Activated CD4-positive, alpha-beta T cell treated with anti-CD3 and anti-CD28 coated beads, Interleukin-2, amount 10 ng/mL, durations not matched to agents 7 days and 5 days (primary cell): ENCODE measurements at regions of chr20 and their contacts with region 1.

Region 1: DNA sequence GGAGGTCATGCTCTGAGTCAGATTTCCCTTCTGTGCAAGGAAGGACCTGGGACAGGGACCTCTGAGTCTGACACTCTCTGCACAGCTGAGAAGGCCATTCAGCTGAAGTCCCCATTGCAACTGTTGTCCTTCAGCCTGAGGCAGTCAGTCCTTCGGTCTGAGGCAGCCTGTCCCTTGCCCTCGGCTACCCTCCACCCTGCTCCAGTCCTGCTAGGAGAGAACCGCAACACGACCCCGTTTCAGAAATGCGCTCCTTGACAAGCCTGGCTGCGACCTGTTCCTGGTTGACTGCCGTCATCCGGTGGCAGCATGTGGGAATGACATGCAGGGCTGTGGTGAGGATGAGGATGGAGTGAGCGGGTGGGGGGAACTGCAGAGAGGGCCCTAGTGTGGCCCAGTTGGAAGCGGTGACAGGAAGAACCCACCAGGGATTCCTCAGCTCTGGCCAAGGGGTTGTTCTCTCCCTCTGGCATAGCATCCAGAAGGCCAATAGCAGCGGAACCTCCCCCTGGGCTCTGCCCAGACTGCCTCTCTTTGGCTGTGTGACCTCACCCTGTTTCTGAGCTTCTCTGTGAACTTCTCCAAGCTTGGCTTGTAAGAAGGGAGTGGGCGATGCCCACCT is 40.3 kb upstream of the ANGPT4 start:
- DNase-seq: peak; percentile 76
- H3K4me3 Mint-ChIP-seq: no peak overlapping the region
- H3K27ac Mint-ChIP-seq: no peak overlapping the region
- H3K4me1 Mint-ChIP-seq: peaks cover 2% of the 10 kb centered on the region
- H3K27me3 Mint-ChIP-seq: peaks cover 14% of the 10 kb centered on the region

Region 2: DNA sequence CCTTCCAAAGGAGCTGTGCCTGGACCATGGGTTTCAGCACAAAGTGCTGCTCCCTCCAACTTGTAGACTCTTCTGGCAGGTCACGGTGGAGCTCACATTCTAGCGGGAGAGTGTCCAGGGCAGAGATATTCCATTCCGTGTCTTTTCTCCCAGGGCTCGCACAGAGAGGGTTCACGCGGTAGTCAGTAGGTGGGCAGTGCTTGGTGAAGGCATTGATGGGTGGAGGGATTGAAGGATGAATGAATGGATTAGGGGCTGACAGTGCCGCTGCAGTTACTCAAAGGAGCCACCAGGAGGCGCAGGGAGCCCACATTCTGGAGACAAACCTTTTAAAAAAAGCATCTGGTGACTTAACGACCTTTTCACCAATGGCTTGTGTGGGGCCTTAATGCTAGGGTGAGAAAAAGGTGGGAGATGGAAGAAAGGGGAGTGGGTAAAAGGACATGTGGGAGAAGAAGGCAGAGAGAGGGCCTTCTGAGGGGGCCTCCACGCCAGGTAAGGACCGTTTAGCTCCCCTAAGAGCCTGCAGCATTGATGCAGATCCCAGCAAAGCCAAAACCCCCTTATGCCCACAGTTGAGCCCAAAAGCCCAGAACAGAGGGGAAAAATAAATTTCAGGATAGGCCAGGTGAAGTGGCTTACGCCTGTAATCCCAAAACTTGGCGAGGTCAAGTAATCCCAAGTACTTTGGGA is 140.4 kb before region 1 on chr20:
- CTCF ChIA-PET with region 1: interaction called, 49 read pairs
- POLR2A ChIA-PET with region 1: no interaction called
- DNase-seq: peak; percentile 70
- H3K4me3 Mint-ChIP-seq: no peak overlapping the region
- H3K27ac Mint-ChIP-seq: no peak overlapping the region
- H3K4me1 Mint-ChIP-seq: peaks cover 8% of the 10 kb centered on the region
- H3K27me3 Mint-ChIP-seq: peaks cover 12% of the 10 kb centered on the region

Region 3: DNA sequence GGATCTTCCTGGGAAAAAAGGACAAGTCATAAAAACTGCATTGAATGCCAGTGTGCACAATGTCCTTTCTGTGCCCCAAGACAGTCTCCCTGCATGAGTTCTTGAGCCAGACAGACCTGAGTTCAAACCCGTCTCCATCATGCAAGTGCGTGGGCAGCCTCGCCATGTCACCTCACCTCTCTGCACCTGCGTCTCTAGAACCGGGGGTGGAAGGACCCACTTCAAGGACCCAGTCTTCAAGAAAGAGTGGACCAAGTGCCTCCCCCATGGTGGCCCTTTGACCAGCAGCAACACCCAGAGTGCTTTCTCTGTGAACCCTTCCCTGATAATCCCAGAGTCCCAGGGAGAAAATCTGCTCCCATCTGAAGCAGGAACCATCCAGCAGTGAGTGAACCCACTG is 16.8 kb before region 1 on chr20:
- CTCF ChIA-PET with region 1: no interaction called
- POLR2A ChIA-PET with region 1: no interaction called
- DNase-seq: no peak
- H3K4me3 Mint-ChIP-seq: no peak overlapping the region
- H3K27ac Mint-ChIP-seq: no peak overlapping the region
- H3K4me1 Mint-ChIP-seq: no peaks in the 10 kb centered on the region
- H3K27me3 Mint-ChIP-seq: peaks cover 2% of the 10 kb centered on the region

Region 4: GRCh38 chr20:967796-968742 is 11.6 kb after region 1 on chr20:
- CTCF ChIA-PET with region 1: interaction called, 14 read pairs
- POLR2A ChIA-PET with region 1: no interaction called
- DNase-seq: peak; percentile 26
- H3K4me3 Mint-ChIP-seq: no peak overlapping the region
- H3K27ac Mint-ChIP-seq: no peak overlapping the region
- H3K4me1 Mint-ChIP-seq: no peaks in the 10 kb centered on the region
- H3K27me3 Mint-ChIP-seq: no peaks in the 10 kb centered on the region